PC-3 (cell line): ENCODE measurements at regions of chr2 and their contacts with region 1.

Region 1: GRCh38 chr2:95323347-95324185 is 26.4 kb downstream of the KCNIP3 start:
- DNase-seq: peak; percentile 87
- ATAC-seq: peak; percentile 96
- H3K4me3 ChIP-seq: no peak overlapping the region
- H3K27ac ChIP-seq: no peak overlapping the region
- H3K4me1 ChIP-seq: 0 out of 2 replicates have a peak, but pooled peaks cover 8% of the 10 kb centered on the region
- H3K27me3 ChIP-seq: no peaks in the 10 kb centered on the region
- CTCF ChIP-seq: peak; percentile 89

Region 2: DNA sequence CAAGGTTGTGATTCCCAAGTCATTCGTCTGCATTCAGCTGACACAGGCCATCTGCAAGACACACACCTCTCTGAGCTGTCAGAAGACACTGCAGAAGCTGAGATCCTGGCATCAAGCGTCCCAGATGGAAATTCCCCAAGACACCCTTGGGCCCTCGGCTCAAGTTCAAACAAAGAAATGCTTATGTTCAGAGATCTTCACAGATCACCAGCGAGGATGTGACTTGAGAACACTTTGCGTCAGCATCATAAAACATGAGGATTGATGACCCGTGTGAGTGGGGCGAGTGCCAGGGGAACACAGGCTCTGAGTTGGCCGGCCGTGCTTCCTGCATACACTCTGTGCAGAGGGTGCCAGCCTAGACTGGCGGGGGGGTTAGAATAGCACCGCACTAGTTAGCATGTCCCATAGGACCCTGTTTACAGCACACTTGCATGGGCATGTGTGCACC is 10.3 kb after region 1 on chr2:
- CTCF ChIA-PET with region 1: no interaction called
- POLR2A ChIA-PET with region 1: no interaction called
- intact Hi-C with region 1: loop called (anchors 1 kb)
- DNase-seq: peak; percentile 99
- ATAC-seq: peak; percentile 86
- H3K4me3 ChIP-seq: no peak overlapping the region
- H3K27ac ChIP-seq: peak overlapping the region; percentile 97
- H3K4me1 ChIP-seq: peaks cover 41% of the 10 kb centered on the region
- H3K27me3 ChIP-seq: no peaks in the 10 kb centered on the region
- CTCF ChIP-seq: no peak

Region 3: GRCh38 chr2:95345566-95346230 is 22.1 kb after region 1 on chr2:
- CTCF ChIA-PET with region 1: interaction called, 3 read pairs
- POLR2A ChIA-PET with region 1: no interaction called
- intact Hi-C with region 1: loop called (anchors 1 kb)
- DNase-seq: peak; percentile 87
- ATAC-seq: peak; percentile 87
- H3K4me3 ChIP-seq: peak overlapping the region; percentile 84
- H3K27ac ChIP-seq: peak overlapping the region; percentile 83
- H3K4me1 ChIP-seq: peaks cover 25% of the 10 kb centered on the region
- H3K27me3 ChIP-seq: no peaks in the 10 kb centered on the region
- CTCF ChIP-seq: peak; percentile 82

Region 4: GRCh38 chr2:95402370-95403203 is 79.0 kb after region 1 on chr2 and contains the start of gene FAHD2A:
- CTCF ChIA-PET with region 1: no interaction called
- POLR2A ChIA-PET with region 1: no interaction called
- intact Hi-C with region 1: loop called (anchors 5 kb)
- DNase-seq: peak; percentile 93
- ATAC-seq: peak; percentile 86
- H3K4me3 ChIP-seq: peak within 1 kb of the TSS; percentile 100
- H3K27ac ChIP-seq: peak within 1 kb of the TSS; percentile 34; the same call in 1 of the 2 replicates
- H3K4me1 ChIP-seq: peaks cover 6% of the 10 kb centered on the region; the same call in 1 of the 2 replicates
- H3K27me3 ChIP-seq: no peaks in the 10 kb centered on the region
- CTCF ChIP-seq: no peak
- total RNA-seq, gene FAHD2A: 10.8 and 20.5 TPM in 2 replicates